Stomach (tissue), 19 donors: ENCODE measurements at regions of chr2 and their contacts with region 1.

Region 1: DNA sequence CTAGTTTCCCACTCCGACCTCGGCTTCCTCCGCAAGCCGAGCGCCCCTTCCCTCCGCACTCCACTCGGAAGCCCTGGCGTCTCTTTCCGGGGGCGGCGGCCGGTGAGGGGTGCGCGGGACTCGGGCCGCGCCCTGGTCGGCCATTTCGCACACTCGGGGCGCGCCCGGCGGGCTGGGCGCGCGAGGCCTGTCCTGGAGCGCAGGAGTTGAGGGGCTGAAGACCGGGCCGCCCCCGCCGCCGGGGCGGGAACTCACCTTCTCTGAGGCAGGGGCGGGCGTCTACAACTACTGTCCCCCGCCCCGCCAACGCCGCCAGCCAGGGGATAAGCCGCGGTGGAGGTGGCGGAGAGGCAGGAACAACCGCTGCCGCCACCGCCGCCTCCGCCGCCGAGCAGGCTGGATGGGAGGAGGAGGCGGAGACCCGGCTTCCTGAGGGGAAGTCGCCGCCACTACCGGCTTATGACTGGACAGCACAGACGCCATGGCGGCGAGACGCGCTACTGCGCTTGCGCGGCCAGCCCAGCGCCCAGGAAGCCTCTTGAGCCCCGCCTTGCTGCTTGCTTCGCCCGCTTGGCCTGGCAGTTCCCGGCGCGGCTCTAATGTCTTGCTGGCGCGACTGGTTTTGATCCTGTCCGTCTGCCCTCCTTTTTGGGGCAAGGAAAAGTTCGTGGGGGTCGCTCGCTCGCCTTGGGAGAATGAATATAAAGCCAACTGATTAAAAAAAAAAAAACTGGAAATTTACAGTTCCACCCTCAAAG is at the start of gene KRCC1:
- DNase-seq: peak; percentile 97 to 99
- H3K4me3 ChIP-seq: peak within 1 kb of the TSS; percentile 65 to 94 (median 82)
- H3K27ac ChIP-seq: peak within 1 kb of the TSS; percentile 94 to 100 (median 98)
- H3K4me1 ChIP-seq: peaks cover 17 to 55% (median 33%) of the 10 kb centered on the region in 4 donors
- H3K27me3 ChIP-seq: no peaks in the 10 kb centered on the region
- CTCF ChIP-seq: peak in 1 of 7 experiments; percentile 22
- EP300 ChIP-seq: no peak
- POLR2A ChIP-seq: peak in 2 of 4 donors; percentile 51 to 77
- total RNA-seq, gene KRCC1: 7.0 to 44.3 (median 22.6) TPM

Region 2: GRCh38 chr2:88159955-88160415 is 104.4 kb after region 1 on chr2:
- intact Hi-C with region 1: loop called (anchors 5 kb)
- DNase-seq: peak; percentile 74 to 86
- H3K4me3 ChIP-seq: no peak overlapping the region
- H3K27ac ChIP-seq: peak overlapping the region in 2 of 5 donors; percentile 22 to 26
- H3K4me1 ChIP-seq: peaks cover 0 to 18% (median 3%) of the 10 kb centered on the region in 4 donors
- H3K27me3 ChIP-seq: no peaks in the 10 kb centered on the region
- CTCF ChIP-seq: peak in 5 of 7 experiments; percentile 67 to 90 (median 87)
- EP300 ChIP-seq: no peak
- POLR2A ChIP-seq: no peak

Region 3: GRCh38 chr2:88177556-88177955 is 122.0 kb after region 1 on chr2:
- intact Hi-C with region 1: loop called (anchors 5 kb)
- DNase-seq: no peak
- H3K4me3 ChIP-seq: no peak overlapping the region
- H3K27ac ChIP-seq: no peak overlapping the region
- H3K4me1 ChIP-seq: peaks cover 0 to 17% (median 0%) of the 10 kb centered on the region in 4 donors
- H3K27me3 ChIP-seq: no peaks in the 10 kb centered on the region
- CTCF ChIP-seq: no peak
- EP300 ChIP-seq: no peak
- POLR2A ChIP-seq: no peak

Region 4: GRCh38 chr2:88307817-88308216 is 252.3 kb after region 1 on chr2:
- intact Hi-C with region 1: no loop called
- DNase-seq: no peak
- H3K4me3 ChIP-seq: no peak overlapping the region
- H3K27ac ChIP-seq: no peak overlapping the region
- H3K4me1 ChIP-seq: no peaks in the 10 kb centered on the region
- H3K27me3 ChIP-seq: no peaks in the 10 kb centered on the region
- CTCF ChIP-seq: no peak
- EP300 ChIP-seq: no peak
- POLR2A ChIP-seq: no peak